Activated T-helper 2 cell treated with anti-CD3 and anti-CD28 coated beads, Interferon-gamma antibody, Interleukin-2, Interleukin-4, amounts not matched to agents 10 μg/mL and 5 μg/mL and 100 μg/mL, durations not matched to agents 14 hours and 24 hours and 36 hours (primary cell): ENCODE measurements at regions of chr20 and their contacts with region 1.

Region 1: DNA sequence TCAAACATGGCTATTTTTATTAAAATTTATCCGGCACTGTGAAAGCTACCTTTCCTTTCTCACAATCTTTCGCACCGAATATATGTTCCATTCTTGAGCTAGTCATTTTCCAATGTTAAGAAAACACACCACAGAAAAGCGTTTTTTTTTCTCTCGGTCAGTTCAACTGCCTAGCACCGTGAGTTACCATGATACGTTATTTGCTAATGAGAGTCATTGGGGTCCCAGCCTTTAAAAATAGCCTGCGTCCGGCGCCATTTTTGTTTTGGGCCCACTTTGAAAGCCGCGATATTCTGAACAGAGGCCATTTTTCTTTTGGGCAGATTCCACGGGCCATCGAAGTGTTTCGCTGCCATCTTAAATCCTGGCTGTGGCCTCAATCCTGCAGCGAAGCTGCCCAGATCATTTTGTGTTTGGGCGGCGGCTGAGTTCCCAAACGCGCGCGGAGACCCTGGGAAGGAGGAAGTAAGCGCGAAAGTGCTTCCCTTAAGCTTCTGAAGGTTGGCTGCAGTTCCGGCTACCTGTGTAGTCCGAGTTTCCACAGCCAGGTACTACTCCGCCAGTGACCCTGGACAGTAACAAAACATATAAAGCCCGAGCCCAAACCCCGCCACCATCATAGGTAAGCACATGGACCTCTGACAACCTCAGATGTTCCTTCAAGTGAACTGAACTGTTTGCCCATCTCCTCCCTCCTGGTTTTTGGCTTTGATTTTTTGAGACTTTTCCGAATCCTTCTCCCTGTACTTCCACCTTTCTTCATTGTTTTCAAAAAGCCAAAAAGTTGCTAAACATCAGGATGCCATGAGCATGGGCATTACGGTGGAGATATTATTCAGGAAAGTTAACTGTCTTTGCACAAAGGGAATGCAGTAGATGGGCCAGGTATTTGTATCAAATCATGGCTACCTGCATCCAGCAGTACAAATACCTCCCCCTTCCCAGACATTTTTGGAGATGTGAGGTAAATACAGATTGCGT is at the start of gene SLX4IP:
- DNase-seq: peak; percentile 78
- H3K4me3 Mint-ChIP-seq: peak within 1 kb of the TSS; percentile 97
- H3K27ac Mint-ChIP-seq: peak within 1 kb of the TSS; percentile 97
- H3K4me1 Mint-ChIP-seq: peaks cover 59% of the 10 kb centered on the region
- H3K27me3 Mint-ChIP-seq: no peaks in the 10 kb centered on the region
- total RNA-seq, gene SLX4IP: 6.3 and 6.4 TPM in 2 replicates

Region 2: DNA sequence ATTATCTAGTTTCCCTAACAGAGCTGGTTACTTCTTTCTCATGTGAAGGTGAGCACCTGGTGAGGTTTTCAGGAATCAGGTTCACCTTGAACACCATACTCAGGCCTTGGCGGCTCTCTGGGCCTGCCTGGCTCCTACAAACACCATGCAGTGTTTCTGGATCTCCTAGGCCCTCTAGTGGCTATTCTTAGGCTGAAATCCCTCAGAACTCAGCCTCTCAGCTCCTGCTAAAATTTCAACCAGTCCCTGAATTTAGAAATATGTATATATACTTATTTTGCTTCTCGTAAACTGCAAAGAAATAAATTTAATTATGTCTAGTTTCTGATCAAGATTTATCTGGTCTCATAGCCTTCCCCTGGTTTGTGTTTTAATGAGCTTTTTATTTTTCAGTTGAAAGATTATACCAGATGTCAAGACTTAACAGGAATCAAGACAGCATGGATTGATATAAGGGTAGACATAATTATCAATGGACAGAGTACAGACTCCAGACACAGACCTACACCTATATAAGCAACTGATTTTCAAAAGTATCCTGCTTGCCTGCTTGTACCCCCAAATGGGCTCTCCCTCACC is 344.4 kb before region 1 on chr20:
- intact Hi-C with region 1: no loop called
- DNase-seq: no peak
- H3K4me3 Mint-ChIP-seq: no peak overlapping the region
- H3K27ac Mint-ChIP-seq: no peak overlapping the region
- H3K4me1 Mint-ChIP-seq: no peaks in the 10 kb centered on the region
- H3K27me3 Mint-ChIP-seq: no peaks in the 10 kb centered on the region

Region 3: DNA sequence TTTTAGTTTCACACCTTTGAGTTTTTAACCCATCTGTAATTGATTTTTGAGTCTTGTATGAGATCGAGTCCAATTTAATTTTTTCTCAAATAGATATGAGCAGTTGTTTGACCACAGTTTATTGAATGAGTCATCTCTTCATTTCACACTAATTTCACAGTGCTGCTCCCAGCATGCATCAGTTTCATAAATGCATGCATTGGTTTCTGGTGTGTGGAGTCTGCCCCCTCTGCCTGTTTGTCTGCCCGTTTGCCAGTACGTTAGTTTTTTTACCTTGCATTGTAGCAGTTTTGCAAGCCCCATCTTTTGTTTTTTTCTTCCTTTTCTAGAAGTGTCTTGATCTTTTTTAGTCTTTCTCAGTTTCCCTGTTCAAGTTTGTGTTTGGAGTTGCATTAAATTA is 11.9 kb after region 1 on chr20:
- intact Hi-C with region 1: loop called (anchors 1 kb)
- DNase-seq: peak; percentile 63
- H3K4me3 Mint-ChIP-seq: peak overlapping the region; percentile 72
- H3K27ac Mint-ChIP-seq: peak overlapping the region; percentile 87
- H3K4me1 Mint-ChIP-seq: peaks cover 36% of the 10 kb centered on the region
- H3K27me3 Mint-ChIP-seq: no peaks in the 10 kb centered on the region

Region 4: GRCh38 chr20:10581823-10582222 is 146.7 kb after region 1 on chr20:
- intact Hi-C with region 1: no loop called
- DNase-seq: no peak
- H3K4me3 Mint-ChIP-seq: no peak overlapping the region
- H3K27ac Mint-ChIP-seq: no peak overlapping the region
- H3K4me1 Mint-ChIP-seq: peaks cover 13% of the 10 kb centered on the region
- H3K27me3 Mint-ChIP-seq: peaks cover 2% of the 10 kb centered on the region

Region 5: GRCh38 chr20:10673988-10674711 is 239.0 kb after region 1 on chr20 and contains the start of gene JAG1:
- intact Hi-C with region 1: loop called (anchors 1 kb)
- DNase-seq: peak; percentile 78
- H3K4me3 Mint-ChIP-seq: peak within 1 kb of the TSS; percentile 92
- H3K27ac Mint-ChIP-seq: peak within 1 kb of the TSS; percentile 87
- H3K4me1 Mint-ChIP-seq: peaks cover 30% of the 10 kb centered on the region
- H3K27me3 Mint-ChIP-seq: peaks cover 68% of the 10 kb centered on the region
- total RNA-seq, gene JAG1: 2.8 and 3.1 TPM in 2 replicates

Region 6: DNA sequence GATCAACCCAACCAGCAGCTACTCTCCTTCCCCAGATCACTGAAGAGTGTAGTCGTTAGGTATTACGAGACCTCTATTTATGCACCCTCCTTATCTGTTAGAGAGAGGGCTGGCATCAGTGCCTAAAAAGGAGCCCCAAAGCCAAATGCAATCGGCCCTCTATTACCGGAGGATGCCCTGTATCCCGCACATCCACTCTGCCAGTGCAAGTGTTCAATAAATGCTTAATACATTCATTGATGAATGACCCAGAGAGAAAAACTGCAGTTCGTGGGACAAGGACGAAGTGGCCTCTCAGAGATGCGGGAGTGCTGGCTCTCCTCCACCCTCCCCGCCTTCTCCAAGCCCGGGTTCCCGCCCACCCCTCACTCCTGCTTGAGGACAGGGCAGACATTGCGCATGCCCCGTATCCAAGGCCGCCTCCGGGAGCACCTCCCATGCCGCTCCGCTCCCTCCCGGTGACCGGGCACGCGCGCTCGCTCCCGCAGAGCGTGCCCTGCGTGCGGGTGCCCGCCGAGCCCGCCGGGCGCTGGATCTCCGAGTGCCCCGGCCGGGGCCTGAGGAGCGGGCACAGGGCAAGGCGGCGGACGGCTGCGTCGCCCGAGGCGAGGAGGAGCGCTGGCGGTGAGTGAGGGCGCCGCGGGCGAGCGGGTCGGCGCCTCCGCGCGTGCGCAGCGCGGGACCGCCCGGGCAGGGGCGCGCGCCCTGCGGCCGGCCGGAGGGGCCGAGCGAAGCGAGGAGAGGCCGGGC is 1455.4 kb after region 1 on chr20:
- intact Hi-C with region 1: loop called (anchors 5 kb)
- DNase-seq: peak; percentile 58
- H3K4me3 Mint-ChIP-seq: peak overlapping the region; percentile 77
- H3K27ac Mint-ChIP-seq: no peak overlapping the region
- H3K4me1 Mint-ChIP-seq: peaks cover 17% of the 10 kb centered on the region
- H3K27me3 Mint-ChIP-seq: peaks cover 27% of the 10 kb centered on the region